Activated B cell treated with CpG ODN at 0.5 μM for 24 hours (primary cell): ENCODE measurements at regions of chr6 and their contacts with region 1.

Region 1: GRCh38 chr6:227074-227782 is 65.1 kb upstream of the DUSP22 start:
- DNase-seq: no peak
- ATAC-seq: peak; percentile 90
- H3K4me3 Mint-ChIP-seq: peak overlapping the region; percentile 55
- H3K27ac Mint-ChIP-seq: peak overlapping the region; percentile 80
- H3K4me1 Mint-ChIP-seq: peaks cover 67% of the 10 kb centered on the region
- H3K27me3 Mint-ChIP-seq: no peaks in the 10 kb centered on the region
- CTCF ChIP-seq: no peak

Region 2: DNA sequence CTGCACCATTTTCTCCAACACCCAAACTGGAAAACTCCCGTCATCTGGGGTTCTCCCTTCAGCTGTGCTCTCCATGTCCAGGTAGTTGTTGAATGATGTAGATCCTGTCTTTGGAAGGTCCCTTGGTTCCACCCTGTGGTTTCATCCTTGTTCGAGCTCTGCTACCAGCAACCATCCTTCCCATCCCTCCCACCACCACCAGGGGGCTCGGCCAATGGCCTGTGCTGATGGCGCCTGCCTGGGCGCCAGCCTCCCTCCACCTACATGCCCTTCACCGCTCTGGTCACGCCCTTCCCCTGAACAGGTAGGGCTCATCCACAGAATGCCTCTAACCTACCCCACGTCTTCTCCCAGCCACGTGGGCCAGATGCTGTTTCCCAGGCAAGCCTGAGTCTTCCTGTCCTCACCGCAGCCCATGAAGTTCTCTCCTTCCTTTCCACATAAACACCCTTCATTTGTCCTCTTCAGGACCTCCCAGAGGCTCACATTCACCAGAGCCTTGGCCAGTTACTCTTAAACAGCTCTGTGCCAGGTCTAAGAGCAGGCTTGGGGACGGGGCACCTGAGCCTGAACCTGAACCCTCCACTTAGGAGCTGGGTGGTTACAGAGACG is 10.1 kb before region 1 on chr6:
- CTCF ChIA-PET with region 1: interaction called, 27 read pairs
- POLR2A ChIA-PET with region 1: interaction called, 51 read pairs
- intact Hi-C with region 1: loop called (anchors 1 kb)
- DNase-seq: no peak
- ATAC-seq: no peak
- H3K4me3 Mint-ChIP-seq: peak overlapping the region; percentile 61
- H3K27ac Mint-ChIP-seq: peak overlapping the region; percentile 90
- H3K4me1 Mint-ChIP-seq: peaks cover 81% of the 10 kb centered on the region
- H3K27me3 Mint-ChIP-seq: no peaks in the 10 kb centered on the region
- CTCF ChIP-seq: no peak

Region 3: GRCh38 chr6:328136-328670 is 101.0 kb after region 1 on chr6:
- CTCF ChIA-PET with region 1: interaction called, 3 read pairs
- POLR2A ChIA-PET with region 1: interaction called, 10 read pairs
- intact Hi-C with region 1: no loop called
- DNase-seq: peak; percentile 20
- ATAC-seq: peak; percentile 90
- H3K4me3 Mint-ChIP-seq: no peak overlapping the region
- H3K27ac Mint-ChIP-seq: no peak overlapping the region
- H3K4me1 Mint-ChIP-seq: peaks cover 8% of the 10 kb centered on the region
- H3K27me3 Mint-ChIP-seq: no peaks in the 10 kb centered on the region
- CTCF ChIP-seq: no peak

Region 4: GRCh38 chr6:399785-400534 is 172.7 kb after region 1 on chr6:
- CTCF ChIA-PET with region 1: interaction called, 37 read pairs
- POLR2A ChIA-PET with region 1: interaction called, 106 read pairs
- intact Hi-C with region 1: loop called (anchors 1 kb)
- DNase-seq: no peak
- ATAC-seq: peak; percentile 51
- H3K4me3 Mint-ChIP-seq: peak overlapping the region; percentile 29
- H3K27ac Mint-ChIP-seq: peak overlapping the region; percentile 69
- H3K4me1 Mint-ChIP-seq: peaks cover 93% of the 10 kb centered on the region
- H3K27me3 Mint-ChIP-seq: no peaks in the 10 kb centered on the region
- CTCF ChIP-seq: no peak

Region 5: DNA sequence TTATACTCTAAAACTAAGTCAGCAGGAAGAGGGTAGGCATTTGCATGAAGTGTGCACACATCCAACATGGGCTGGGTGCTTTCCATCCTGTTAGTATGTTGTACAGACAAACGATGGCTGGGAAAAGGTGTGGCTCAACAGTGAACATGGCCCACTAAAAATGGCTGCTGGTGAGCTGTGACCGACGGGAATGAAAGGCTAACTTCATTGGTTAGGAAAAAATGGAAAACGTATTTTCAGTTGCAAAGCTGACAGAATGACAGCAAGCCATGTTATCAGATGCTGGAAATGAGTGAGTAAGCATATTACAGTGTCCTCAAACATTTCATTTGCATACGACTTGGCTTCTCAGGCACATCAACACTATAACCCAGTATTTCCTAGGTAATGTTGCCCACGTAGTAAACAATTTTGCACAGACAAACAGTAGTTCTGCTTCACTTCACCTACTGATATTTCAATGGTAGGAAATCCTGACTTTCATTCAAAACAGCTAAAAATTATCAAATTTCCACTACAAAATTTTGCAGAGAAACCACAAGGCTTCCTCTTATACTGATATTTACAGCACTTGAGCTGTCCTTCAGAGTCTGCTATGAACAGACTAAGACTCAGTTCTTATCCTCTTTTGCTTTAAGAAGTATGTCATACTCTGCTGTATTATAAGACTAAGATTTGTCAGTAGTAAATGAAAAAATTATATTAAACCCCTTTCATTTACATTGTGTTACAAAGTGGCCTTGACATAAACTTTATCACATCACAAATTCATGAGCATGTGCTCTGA is 263.2 kb after region 1 on chr6:
- CTCF ChIA-PET with region 1: interaction called, 3 read pairs
- POLR2A ChIA-PET with region 1: interaction called, 9 read pairs
- intact Hi-C with region 1: loop called (anchors 5 kb)
- DNase-seq: no peak
- ATAC-seq: peak; percentile 35
- H3K4me3 Mint-ChIP-seq: peak overlapping the region; percentile 65
- H3K27ac Mint-ChIP-seq: peak overlapping the region; percentile 92
- H3K4me1 Mint-ChIP-seq: peaks cover 64% of the 10 kb centered on the region
- H3K27me3 Mint-ChIP-seq: no peaks in the 10 kb centered on the region
- CTCF ChIP-seq: no peak

Region 6: GRCh38 chr6:527989-528673 is 300.9 kb after region 1 on chr6:
- CTCF ChIA-PET with region 1: no interaction called
- POLR2A ChIA-PET with region 1: no interaction called
- intact Hi-C with region 1: no loop called
- DNase-seq: no peak
- ATAC-seq: no peak
- H3K4me3 Mint-ChIP-seq: no peak overlapping the region
- H3K27ac Mint-ChIP-seq: no peak overlapping the region
- H3K4me1 Mint-ChIP-seq: peaks cover 3% of the 10 kb centered on the region
- H3K27me3 Mint-ChIP-seq: no peaks in the 10 kb centered on the region
- CTCF ChIP-seq: no peak

Region 7: DNA sequence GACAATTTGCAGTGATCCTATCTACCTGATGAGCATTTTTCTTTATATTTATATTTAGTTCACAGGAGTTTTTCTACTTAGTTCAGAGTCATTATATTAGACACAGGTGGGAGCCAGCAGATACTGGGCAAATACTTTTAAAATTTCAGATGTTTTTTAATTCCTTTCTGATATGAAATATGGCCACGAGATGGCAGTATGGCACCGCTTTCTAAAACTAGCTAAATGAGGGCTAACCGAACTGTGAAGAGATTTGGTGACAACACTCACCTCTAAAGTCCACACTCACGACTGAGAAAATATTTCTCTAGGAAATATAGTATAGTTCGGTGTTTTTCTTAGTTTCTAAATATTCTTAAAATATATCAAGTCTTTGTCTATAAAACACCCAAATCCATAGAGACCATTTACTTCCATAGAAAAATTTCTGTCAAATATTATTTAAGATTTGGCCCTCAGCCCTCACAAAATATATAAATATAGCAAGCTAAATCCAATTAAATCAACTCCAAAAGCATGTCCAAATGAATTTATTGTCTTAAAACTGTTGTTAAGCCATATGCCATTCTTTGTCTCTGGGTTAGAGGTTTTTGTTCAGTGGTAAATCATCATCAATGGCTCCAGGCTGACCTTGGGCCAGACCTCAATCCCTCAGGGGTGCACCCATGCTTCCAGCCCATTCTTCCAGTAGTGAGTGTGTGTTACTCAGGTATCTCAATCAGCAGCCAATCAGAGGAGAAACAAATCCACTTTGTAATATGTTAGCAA is 366.1 kb after region 1 on chr6:
- CTCF ChIA-PET with region 1: interaction called, 24 read pairs
- POLR2A ChIA-PET with region 1: no interaction called
- intact Hi-C with region 1: loop called (anchors 1 kb)
- DNase-seq: no peak
- ATAC-seq: peak; percentile 56
- H3K4me3 Mint-ChIP-seq: no peak overlapping the region
- H3K27ac Mint-ChIP-seq: no peak overlapping the region
- H3K4me1 Mint-ChIP-seq: no peaks in the 10 kb centered on the region
- H3K27me3 Mint-ChIP-seq: no peaks in the 10 kb centered on the region
- CTCF ChIP-seq: no peak